Mammary epithelial cell (primary cell): ENCODE measurements at regions of chr2 and their contacts with region 1.

Region 1: DNA sequence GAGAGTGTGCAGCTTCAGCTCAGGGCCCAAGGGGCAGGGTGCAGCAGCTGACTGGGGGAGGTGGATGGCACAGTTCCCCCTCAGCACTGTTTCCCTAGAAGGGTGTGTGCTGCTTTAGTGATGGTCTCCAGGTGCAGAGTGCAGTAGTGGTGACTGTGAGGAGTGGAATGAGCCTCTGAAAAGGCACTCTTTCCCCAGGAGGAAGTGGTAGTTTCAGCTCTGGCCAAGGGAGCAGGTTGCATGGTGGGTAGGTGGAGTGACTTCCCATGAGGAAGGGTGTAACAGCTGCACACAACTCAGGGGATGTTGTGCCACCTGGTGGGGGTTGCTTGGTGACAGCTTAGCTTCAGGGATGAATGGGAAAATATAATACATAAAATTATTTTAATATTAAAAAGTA is 251.5 kb upstream of the NXPH2 start:
- DNase-seq: peak; percentile 36
- H3K4me3 ChIP-seq: no peak overlapping the region
- H3K27ac ChIP-seq: no peak overlapping the region
- H3K4me1 ChIP-seq: peaks cover 14% of the 10 kb centered on the region
- H3K27me3 ChIP-seq: no peaks in the 10 kb centered on the region
- CTCF ChIP-seq: peak; percentile 26 to 51

Region 2: GRCh38 chr2:138707392-138708074 is 324.2 kb before region 1 on chr2:
- CTCF ChIA-PET with region 1: no interaction called
- dilution Hi-C with region 1: no loop called
- in situ Hi-C with region 1: no loop called
- intact Hi-C with region 1: no loop called
- DNase-seq: peak; percentile 55
- H3K4me3 ChIP-seq: no peak overlapping the region
- H3K27ac ChIP-seq: no peak overlapping the region
- H3K4me1 ChIP-seq: peaks cover 16% of the 10 kb centered on the region
- H3K27me3 ChIP-seq: no peaks in the 10 kb centered on the region
- CTCF ChIP-seq: no peak

Region 3: DNA sequence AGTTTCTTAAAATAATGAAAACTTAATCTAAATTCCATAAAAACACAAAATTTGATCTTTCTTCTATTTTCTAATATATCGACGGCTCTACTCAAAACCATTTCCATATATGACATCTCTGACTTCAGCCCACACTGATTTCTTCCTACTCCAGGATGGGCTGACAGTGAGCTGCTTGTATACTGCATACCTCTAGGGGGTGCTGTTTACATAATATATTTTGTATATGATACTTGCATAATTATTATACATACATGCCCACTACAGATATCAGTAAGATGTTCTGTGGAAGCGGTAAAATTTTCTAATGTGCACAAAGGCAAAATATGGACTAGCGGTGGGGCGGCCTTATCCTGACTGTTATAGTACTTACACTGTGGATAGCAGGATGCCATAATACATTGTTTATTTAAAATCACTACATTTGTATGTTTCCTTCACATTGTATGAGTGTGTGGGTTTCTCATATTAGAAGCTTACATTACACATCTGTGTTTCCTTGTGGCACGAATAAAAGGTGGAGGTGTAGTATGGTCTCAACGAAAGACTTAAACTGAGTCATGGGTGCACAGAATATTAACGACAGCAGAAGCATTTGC is 185.4 kb before region 1 on chr2:
- CTCF ChIA-PET with region 1: no interaction called
- dilution Hi-C with region 1: no loop called
- in situ Hi-C with region 1: no loop called
- intact Hi-C with region 1: loop called (anchors 2 kb)
- DNase-seq: peak; percentile 19
- H3K4me3 ChIP-seq: no peak overlapping the region
- H3K27ac ChIP-seq: no peak overlapping the region
- H3K4me1 ChIP-seq: no peaks in the 10 kb centered on the region
- H3K27me3 ChIP-seq: peaks cover 2% of the 10 kb centered on the region
- CTCF ChIP-seq: peak; percentile 68 to 75

Region 4: GRCh38 chr2:138910427-138910826 is 121.3 kb before region 1 on chr2:
- CTCF ChIA-PET with region 1: no interaction called
- dilution Hi-C with region 1: no loop called
- in situ Hi-C with region 1: no loop called
- intact Hi-C with region 1: no loop called
- DNase-seq: no peak
- H3K4me3 ChIP-seq: no peak overlapping the region
- H3K27ac ChIP-seq: no peak overlapping the region
- H3K4me1 ChIP-seq: no peaks in the 10 kb centered on the region
- H3K27me3 ChIP-seq: no peaks in the 10 kb centered on the region
- CTCF ChIP-seq: no peak

Region 5: GRCh38 chr2:138922973-138923563 is 108.7 kb before region 1 on chr2:
- CTCF ChIA-PET with region 1: no interaction called
- dilution Hi-C with region 1: loop called (anchors 25 kb)
- in situ Hi-C with region 1: no loop called
- intact Hi-C with region 1: loop called (anchors 1 kb)
- DNase-seq: peak; percentile 17
- H3K4me3 ChIP-seq: no peak overlapping the region
- H3K27ac ChIP-seq: no peak overlapping the region
- H3K4me1 ChIP-seq: no peaks in the 10 kb centered on the region
- H3K27me3 ChIP-seq: no peaks in the 10 kb centered on the region
- CTCF ChIP-seq: peak; percentile 57 to 59

Region 6: GRCh38 chr2:138948070-138948539 is 83.6 kb before region 1 on chr2:
- CTCF ChIA-PET with region 1: interaction called, 3 read pairs
- dilution Hi-C with region 1: loop called (anchors 25 kb)
- in situ Hi-C with region 1: loop called in 1 of 2 experiments (anchors 10 kb)
- intact Hi-C with region 1: no loop called
- DNase-seq: peak; percentile 98
- H3K4me3 ChIP-seq: no peak overlapping the region
- H3K27ac ChIP-seq: peak overlapping the region; percentile 82
- H3K4me1 ChIP-seq: peaks cover 32% of the 10 kb centered on the region
- H3K27me3 ChIP-seq: no peaks in the 10 kb centered on the region
- CTCF ChIP-seq: no peak